ENCODE measurements at regions of chr12 and their contacts with region 1.

Region 1: DNA sequence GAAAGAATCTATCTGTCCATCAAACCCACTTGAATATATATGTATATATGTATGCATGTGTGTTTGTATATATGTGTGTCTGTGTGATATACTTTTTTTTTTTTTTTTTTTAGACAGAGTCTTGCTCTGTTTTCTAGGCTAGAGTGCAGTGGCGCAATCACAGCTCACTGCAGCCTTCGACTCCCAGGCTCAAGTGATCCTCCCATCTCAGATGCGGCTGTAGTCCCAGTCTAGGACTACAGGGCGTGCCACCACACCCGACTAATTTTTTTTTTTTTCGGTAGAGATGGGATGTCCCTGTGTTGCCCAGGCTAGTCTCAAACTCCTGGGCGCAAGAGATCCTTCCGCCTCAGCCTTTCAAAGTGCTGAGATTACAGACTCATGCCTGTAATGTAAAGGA is 13.0 kb upstream of the APOBEC1 start:
- DNase-seq: no peak
- H3K4me3 ChIP-seq: no peak overlapping the region
- H3K27ac ChIP-seq: no peak overlapping the region
- H3K4me1 ChIP-seq: peaks cover 16 to 48% (median 47%) of the 10 kb centered on the region in 4 experiments
- H3K27me3 ChIP-seq: no peaks in the 10 kb centered on the region

Region 2: GRCh38 chr12:7628381-7628961 is 50.3 kb before region 1 on chr12:
- CTCF ChIA-PET with region 1: no interaction called
- POLR2A ChIA-PET with region 1: no interaction called
- DNase-seq: no peak
- H3K4me3 ChIP-seq: peak overlapping the region in 2 of 7 experiments; percentile 32
- H3K27ac ChIP-seq: no peak overlapping the region
- H3K4me1 ChIP-seq: peaks cover 0 to 6% (median 2%) of the 10 kb centered on the region in 4 experiments
- H3K27me3 ChIP-seq: no peaks in the 10 kb centered on the region

Region 3: GRCh38 chr12:7695237-7696197 is 16.8 kb after region 1 on chr12 and contains the start of gene GDF3:
- CTCF ChIA-PET with region 1: interaction called, 10 read pairs
- POLR2A ChIA-PET with region 1: interaction called, 3 read pairs
- DNase-seq: peak; percentile 75 to 90 (median 87)
- H3K4me3 ChIP-seq: peak within 1 kb of the TSS in 5 of 7 experiments; percentile 33 to 68 (median 46)
- H3K27ac ChIP-seq: peak within 1 kb of the TSS in 1 of 2 experiments; percentile 13
- H3K4me1 ChIP-seq: peaks cover 8 to 31% (median 24%) of the 10 kb centered on the region in 4 experiments
- H3K27me3 ChIP-seq: no peaks in the 10 kb centered on the region

Region 4: DNA sequence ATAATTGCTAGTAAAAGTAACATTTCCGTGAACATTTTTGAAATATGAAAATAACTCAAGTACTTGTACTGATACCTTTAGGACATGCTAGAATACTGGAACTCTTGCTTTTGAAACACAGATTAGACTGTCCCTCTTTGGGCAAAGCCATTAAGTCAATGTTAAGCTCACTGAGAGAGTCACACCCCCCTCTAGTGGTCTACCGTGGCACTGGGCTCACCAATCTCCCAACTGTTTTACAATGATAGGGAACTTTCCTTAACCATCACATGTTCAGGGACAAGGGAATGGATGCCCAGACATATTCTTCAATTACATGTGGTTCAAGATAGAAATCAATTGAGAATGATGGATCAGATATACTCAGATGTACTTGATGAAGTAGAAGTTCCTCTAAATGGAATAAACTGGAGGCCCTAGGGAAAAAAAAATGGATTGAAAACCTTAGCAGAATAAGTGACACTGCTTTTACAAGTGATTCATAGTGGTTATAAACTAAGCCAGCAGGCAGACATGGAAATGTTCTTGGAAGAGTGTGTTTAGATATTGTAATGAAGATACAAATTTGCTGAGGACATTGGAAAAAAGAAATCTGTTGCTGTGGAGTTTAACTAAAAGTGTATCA is 128.2 kb after region 1 on chr12:
- CTCF ChIA-PET with region 1: interaction called, 21 read pairs
- POLR2A ChIA-PET with region 1: no interaction called
- DNase-seq: peak; percentile 74 to 81 (median 75)
- H3K4me3 ChIP-seq: no peak overlapping the region
- H3K27ac ChIP-seq: no peak overlapping the region
- H3K4me1 ChIP-seq: peaks cover 4 to 12% (median 6%) of the 10 kb centered on the region in 4 experiments
- H3K27me3 ChIP-seq: no peaks in the 10 kb centered on the region

Measured in common myeloid progenitor, CD34-positive (primary cell).